Breast epithelium (tissue), 4 donors: ENCODE measurements at regions of chr10 and their contacts with region 1.

Region 1: DNA sequence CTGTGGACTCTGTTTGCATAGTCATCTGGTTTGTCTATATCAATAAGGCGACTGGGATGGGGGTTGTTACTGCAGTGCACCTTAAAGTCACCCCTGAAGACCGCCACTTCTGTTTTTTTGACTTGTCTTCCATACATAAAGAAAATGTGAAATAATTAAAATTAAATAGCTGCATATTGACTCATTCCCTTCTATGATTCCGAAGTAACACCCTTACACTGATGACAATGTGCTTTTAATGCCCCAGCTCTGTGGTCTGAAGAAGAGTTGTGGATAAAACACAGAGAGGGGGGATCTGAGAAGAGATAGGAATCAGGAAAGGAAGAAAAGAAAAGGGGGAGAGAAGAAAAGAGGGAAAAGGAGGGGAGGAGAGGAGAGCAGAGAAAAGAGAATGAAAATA is 796.9 kb upstream of the MBL2 start:
- DNase-seq: no peak
- H3K4me3 ChIP-seq: no peak overlapping the region
- H3K27ac ChIP-seq: no peak overlapping the region
- H3K4me1 ChIP-seq: no peaks in the 10 kb centered on the region
- H3K27me3 ChIP-seq: no peaks in the 10 kb centered on the region
- CTCF ChIP-seq: no peak
- POLR2A ChIP-seq: no peak

Region 2: GRCh38 chr10:53102424-53102823 is 467.0 kb before region 1 on chr10:
- intact Hi-C with region 1: no loop called
- DNase-seq: no peak
- H3K4me3 ChIP-seq: no peak overlapping the region
- H3K27ac ChIP-seq: no peak overlapping the region
- H3K4me1 ChIP-seq: no peaks in the 10 kb centered on the region
- H3K27me3 ChIP-seq: no peaks in the 10 kb centered on the region
- CTCF ChIP-seq: no peak
- POLR2A ChIP-seq: no peak

Region 3: DNA sequence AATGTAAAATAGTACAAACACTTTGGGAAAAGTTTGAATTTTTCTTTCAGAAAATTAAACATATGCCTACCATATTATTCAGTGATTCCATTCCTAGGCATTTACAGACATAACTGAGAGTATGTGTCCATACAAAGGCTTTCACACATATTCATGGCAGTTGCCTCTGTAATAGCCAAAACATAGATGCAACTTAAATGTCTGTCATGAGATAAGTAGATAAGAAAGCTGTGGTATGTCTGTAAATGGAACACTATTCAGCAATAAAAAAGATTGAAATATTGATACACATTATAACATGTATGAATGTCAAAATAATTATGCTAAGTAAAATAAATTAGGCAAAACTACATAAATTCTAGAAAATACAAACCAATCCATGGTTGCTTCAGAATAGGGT is 167.7 kb after region 1 on chr10:
- intact Hi-C with region 1: loop called (anchors 10 kb)
- DNase-seq: no peak
- H3K4me3 ChIP-seq: no peak overlapping the region
- H3K27ac ChIP-seq: no peak overlapping the region
- H3K4me1 ChIP-seq: no peaks in the 10 kb centered on the region
- H3K27me3 ChIP-seq: no peaks in the 10 kb centered on the region
- CTCF ChIP-seq: no peak
- POLR2A ChIP-seq: no peak

Region 4: DNA sequence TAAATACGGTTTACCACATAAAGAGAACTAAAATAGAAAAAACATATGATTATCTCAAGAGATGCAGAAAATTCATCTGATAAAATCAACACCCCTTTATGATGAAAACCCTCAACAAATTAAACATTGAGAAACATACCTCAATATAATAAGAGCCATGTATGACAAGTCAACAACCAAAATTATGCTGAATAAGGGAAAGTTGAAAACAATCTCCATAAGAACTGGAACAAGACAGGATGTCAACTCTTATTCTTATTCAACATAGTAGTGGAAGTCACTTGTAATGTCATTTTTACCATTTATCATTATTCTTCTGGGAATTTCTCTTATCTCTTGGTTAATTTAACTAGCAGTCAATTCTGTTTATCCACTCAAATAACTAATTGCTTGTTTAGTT is 1152.6 kb after region 1 on chr10:
- intact Hi-C with region 1: no loop called
- DNase-seq: no peak
- H3K4me3 ChIP-seq: no peak overlapping the region
- H3K27ac ChIP-seq: no peak overlapping the region
- H3K4me1 ChIP-seq: no peaks in the 10 kb centered on the region
- H3K27me3 ChIP-seq: no peaks in the 10 kb centered on the region
- CTCF ChIP-seq: no peak
- POLR2A ChIP-seq: no peak